Activated CD4-positive, alpha-beta memory T cell treated with anti-CD3 and anti-CD28 coated beads for 36 hours (primary cell): ENCODE measurements at regions of chr6 and their contacts with region 1.

Region 1: DNA sequence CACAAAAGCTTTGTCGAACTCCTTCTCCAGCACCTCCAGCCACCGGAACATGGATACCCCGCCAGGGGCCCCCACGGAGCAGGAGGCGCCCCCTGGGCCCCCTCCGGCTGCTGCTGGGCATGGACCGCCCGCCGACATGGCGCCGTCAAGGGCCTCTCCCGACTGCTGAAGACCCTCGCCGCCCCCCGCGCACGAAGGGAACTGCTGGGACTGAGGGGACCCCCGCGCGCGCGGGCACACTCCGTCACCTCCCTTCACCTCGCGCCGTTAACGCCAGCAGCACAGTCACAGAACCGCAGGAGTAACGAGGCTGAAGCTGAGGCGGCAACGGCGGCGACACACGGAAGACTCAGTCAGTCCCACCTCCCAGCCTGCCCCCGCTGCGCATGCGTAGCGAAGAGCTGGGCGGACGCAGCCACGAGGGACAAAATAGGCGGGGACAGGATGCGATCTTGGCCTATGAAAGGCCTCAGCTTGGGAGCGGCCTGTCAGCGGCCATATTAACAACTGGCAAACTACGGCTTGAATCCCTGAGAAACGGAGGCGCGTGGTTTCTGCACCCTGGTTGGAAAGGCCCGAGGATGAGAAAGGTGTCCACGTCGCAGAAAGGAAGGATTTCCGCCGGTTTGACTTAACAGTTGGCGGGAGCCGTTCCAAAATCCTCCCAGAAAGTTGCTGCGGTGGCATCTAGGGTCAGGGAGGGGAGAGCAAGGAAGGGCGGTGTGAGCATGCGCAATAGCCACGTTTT is at the start of gene GOPC:
- DNase-seq: peak; percentile 97
- H3K4me3 Mint-ChIP-seq: peak within 1 kb of the TSS; percentile 99
- H3K27ac Mint-ChIP-seq: peak within 1 kb of the TSS; percentile 90
- H3K4me1 Mint-ChIP-seq: peaks cover 36% of the 10 kb centered on the region
- H3K27me3 Mint-ChIP-seq: peaks cover 2% of the 10 kb centered on the region
- total RNA-seq, gene GOPC: 14.8 to 15.8 TPM

Region 2: DNA sequence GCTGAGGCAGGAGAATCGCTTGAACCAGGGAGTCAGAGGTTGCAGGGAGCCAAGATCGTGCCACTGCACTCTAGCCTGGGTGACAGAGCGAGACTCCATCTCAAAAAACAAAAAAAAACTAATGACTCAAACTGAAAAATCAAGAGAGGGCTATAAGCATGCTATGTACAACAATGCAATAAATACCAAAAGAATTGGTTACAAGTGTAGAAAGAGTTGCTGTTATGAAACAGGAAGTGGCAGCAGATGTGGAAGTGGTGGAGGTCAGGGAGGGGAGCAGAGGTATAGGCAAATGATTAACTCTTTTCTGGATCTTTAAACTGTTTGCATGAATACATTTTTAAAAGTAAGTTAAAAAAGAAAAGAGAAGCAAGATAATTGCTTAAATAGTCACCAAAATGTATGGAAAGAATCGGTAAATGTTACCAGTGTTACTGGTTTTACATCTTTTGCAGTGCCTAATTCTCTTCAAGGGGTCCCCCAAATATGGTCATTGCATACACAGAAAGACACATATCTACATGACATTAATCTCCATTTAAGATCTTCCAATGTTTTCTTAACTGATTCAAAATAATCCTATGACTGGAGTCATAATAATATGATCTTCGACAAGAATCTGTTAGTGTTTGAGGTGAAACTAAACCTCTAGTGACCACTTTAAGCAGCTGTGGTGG is 1126.2 kb before region 1 on chr6:
- CTCF ChIA-PET with region 1: no interaction called
- POLR2A ChIA-PET with region 1: no interaction called
- intact Hi-C with region 1: no loop called
- DNase-seq: peak; percentile 42
- H3K4me3 Mint-ChIP-seq: no peak overlapping the region
- H3K27ac Mint-ChIP-seq: no peak overlapping the region
- H3K4me1 Mint-ChIP-seq: peaks cover 18% of the 10 kb centered on the region
- H3K27me3 Mint-ChIP-seq: peaks cover 2% of the 10 kb centered on the region

Region 3: DNA sequence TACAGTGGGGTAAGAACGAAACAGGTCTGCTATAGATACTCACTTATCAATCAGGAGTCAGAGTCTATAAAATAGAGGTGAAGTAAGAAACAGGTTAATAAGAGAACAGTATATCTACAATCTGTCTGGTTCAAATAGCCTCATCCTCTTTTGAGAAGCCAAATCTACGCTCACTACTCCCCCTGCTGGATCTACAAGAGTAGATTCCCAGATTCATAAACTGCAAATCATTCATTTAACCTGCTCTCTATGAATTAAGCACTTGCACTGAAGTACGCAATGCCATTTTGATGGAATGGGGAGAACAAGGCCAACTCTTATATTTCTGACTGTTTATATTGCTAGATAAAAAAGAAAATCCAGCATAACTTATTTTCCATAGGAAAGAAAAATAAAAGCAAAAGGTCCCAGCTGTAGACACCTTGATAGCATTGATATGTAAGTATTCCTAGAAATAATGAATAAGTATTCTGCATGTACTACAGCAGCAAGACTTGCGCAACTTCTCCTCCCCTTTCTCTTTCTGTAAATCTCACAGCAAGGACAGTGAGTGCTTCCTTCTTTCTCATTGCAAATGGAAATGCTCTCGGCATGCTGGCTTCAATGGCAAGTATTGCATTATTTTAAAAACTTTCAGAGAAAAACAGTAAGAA is 633.0 kb before region 1 on chr6:
- CTCF ChIA-PET with region 1: no interaction called
- POLR2A ChIA-PET with region 1: no interaction called
- intact Hi-C with region 1: loop called (anchors 5 kb)
- DNase-seq: no peak
- H3K4me3 Mint-ChIP-seq: no peak overlapping the region
- H3K27ac Mint-ChIP-seq: no peak overlapping the region
- H3K4me1 Mint-ChIP-seq: no peaks in the 10 kb centered on the region
- H3K27me3 Mint-ChIP-seq: peaks cover 3% of the 10 kb centered on the region

Region 4: GRCh38 chr6:117414772-117415171 is 187.6 kb before region 1 on chr6:
- CTCF ChIA-PET with region 1: no interaction called
- POLR2A ChIA-PET with region 1: no interaction called
- intact Hi-C with region 1: no loop called
- DNase-seq: no peak
- H3K4me3 Mint-ChIP-seq: no peak overlapping the region
- H3K27ac Mint-ChIP-seq: no peak overlapping the region
- H3K4me1 Mint-ChIP-seq: no peaks in the 10 kb centered on the region
- H3K27me3 Mint-ChIP-seq: peaks cover 8% of the 10 kb centered on the region

Region 5: DNA sequence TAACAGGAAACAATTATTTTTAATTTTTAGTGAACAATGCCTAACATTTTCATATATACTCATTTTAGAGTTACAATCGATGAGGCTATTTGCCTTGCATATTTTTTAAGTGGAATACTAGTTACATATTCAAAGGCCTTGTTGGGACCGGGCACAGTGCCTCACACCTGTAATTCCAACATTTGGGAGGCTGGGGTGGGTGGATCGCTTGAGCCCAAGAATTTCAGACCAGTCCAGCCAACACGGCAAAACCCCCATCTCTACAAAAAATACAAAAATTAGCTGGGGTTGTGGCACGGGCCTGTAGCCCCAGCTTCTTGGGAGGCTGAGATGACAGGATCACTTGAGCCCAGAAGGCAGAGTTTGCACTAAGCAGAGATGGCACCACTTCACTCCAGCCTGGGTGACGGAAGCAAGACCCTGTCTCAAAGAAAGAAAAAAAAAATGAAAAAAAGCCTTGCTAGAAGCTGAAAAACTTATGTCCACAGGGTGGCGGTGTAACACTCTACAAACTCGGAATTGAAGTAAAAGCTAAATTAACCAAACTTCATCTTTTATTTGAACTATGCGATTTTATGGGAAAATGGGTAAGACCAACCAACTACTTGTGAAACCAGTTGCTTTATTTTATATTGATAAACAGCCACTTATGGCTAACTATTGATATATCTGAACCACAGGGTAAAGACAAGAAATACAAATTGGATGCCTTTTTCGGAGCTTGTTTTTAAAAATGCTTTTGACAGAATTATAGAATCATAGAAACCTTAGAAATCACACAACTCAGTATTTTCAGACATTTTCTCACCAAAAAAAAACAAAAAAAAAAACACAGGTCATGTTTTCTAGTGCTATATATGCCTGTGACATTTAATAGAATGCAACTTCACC is 152.5 kb before region 1 on chr6:
- CTCF ChIA-PET with region 1: interaction called, 146 read pairs
- POLR2A ChIA-PET with region 1: interaction called, 3 read pairs
- intact Hi-C with region 1: loop called (anchors 1 kb)
- DNase-seq: peak; percentile 52
- H3K4me3 Mint-ChIP-seq: no peak overlapping the region
- H3K27ac Mint-ChIP-seq: no peak overlapping the region
- H3K4me1 Mint-ChIP-seq: no peaks in the 10 kb centered on the region
- H3K27me3 Mint-ChIP-seq: peaks cover 23% of the 10 kb centered on the region

Region 6: DNA sequence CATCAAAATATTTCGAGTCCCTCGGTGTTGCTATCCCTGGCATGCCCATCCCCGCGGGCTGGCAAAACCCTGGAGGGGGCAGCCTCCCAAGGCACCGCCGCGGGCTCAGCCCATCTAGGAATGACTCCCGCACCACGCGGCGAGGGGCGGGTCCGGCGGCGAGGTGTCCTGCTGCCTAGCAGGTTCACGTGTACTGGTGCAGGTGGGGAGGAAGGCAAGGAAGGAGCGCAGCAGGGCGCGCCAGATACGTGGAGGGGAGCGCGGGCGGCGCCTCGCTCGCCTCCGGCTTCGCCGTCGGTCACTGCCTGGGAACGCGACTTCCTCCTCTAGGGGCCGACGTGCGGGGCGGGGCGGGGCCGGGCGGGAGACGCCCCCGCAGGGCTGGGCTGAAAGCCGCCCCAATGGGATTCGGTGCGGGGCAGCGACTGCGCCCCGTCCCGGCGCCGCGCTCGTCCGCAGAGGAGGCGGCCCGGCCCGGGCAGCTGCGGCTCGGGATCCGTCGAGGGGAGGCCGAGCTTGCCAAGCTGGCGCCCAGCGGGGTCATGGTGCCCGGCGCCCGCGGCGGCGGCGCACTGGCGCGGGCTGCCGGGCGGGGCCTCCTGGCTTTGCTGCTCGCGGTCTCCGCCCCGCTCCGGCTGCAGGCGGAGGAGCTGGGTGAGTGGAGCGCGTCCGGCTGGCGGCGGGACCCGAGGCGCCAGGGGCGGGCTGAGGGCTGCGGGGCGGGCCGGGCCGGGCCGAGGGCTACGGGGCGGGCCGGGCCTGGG is 119.9 kb before region 1 on chr6 and contains the start of gene DCBLD1:
- CTCF ChIA-PET with region 1: interaction called, 34 read pairs
- POLR2A ChIA-PET with region 1: interaction called, 8 read pairs
- intact Hi-C with region 1: loop called (anchors 1 kb)
- DNase-seq: peak; percentile 74
- H3K4me3 Mint-ChIP-seq: peak within 1 kb of the TSS; percentile 82
- H3K27ac Mint-ChIP-seq: no peak within 1 kb of the TSS
- H3K4me1 Mint-ChIP-seq: peaks cover 12% of the 10 kb centered on the region
- H3K27me3 Mint-ChIP-seq: peaks cover 23% of the 10 kb centered on the region
- total RNA-seq, gene DCBLD1: 4.4 to 4.5 TPM

Region 7: DNA sequence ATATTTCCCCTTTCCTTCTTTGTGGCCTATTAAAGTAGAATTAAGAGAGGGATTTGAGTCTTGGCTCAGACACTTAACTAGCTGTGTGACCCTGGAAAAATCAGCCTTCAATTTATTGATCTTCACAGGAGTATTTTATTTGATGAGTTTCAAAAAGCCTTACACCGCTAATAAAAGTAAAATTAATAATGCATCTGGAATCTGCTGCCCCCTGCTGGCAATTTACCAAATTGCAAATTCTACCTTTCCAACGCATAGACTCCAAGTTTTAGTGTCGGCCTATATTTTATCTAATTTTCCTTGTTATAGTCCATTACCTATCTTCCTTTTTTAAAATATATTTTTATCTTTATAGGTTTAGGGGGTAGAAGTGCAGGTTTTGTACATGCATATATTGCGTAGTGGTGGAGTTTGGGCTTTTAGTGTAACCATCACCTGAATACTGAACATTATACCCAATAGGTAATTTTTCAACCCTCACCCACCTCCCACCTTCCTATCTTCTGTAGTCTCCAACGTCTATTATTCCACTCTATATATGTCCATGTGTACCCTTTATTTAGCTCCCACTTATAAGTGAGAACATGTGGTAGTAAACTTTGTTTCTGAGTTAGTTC is 46.3 kb before region 1 on chr6:
- CTCF ChIA-PET with region 1: interaction called, 29 read pairs
- POLR2A ChIA-PET with region 1: interaction called, 3 read pairs
- intact Hi-C with region 1: loop called (anchors 1 kb)
- DNase-seq: peak; percentile 57
- H3K4me3 Mint-ChIP-seq: no peak overlapping the region
- H3K27ac Mint-ChIP-seq: no peak overlapping the region
- H3K4me1 Mint-ChIP-seq: peaks cover 2% of the 10 kb centered on the region
- H3K27me3 Mint-ChIP-seq: no peaks in the 10 kb centered on the region

Region 8: GRCh38 chr6:117585647-117586046 is 16.7 kb before region 1 on chr6:
- CTCF ChIA-PET with region 1: interaction called, 3 read pairs
- POLR2A ChIA-PET with region 1: no interaction called
- intact Hi-C with region 1: loop called (anchors 2 kb)
- DNase-seq: no peak
- H3K4me3 Mint-ChIP-seq: no peak overlapping the region
- H3K27ac Mint-ChIP-seq: no peak overlapping the region
- H3K4me1 Mint-ChIP-seq: peaks cover 35% of the 10 kb centered on the region
- H3K27me3 Mint-ChIP-seq: no peaks in the 10 kb centered on the region

Region 9: GRCh38 chr6:117849087-117849486 is 246.8 kb after region 1 on chr6:
- CTCF ChIA-PET with region 1: no interaction called
- POLR2A ChIA-PET with region 1: no interaction called
- intact Hi-C with region 1: no loop called
- DNase-seq: no peak
- H3K4me3 Mint-ChIP-seq: no peak overlapping the region
- H3K27ac Mint-ChIP-seq: no peak overlapping the region
- H3K4me1 Mint-ChIP-seq: no peaks in the 10 kb centered on the region
- H3K27me3 Mint-ChIP-seq: no peaks in the 10 kb centered on the region